Activated B cell treated with CpG ODN at 0.5 μM for 24 hours (primary cell): ENCODE measurements at regions of chr12 and their contacts with region 1.

Region 1: DNA sequence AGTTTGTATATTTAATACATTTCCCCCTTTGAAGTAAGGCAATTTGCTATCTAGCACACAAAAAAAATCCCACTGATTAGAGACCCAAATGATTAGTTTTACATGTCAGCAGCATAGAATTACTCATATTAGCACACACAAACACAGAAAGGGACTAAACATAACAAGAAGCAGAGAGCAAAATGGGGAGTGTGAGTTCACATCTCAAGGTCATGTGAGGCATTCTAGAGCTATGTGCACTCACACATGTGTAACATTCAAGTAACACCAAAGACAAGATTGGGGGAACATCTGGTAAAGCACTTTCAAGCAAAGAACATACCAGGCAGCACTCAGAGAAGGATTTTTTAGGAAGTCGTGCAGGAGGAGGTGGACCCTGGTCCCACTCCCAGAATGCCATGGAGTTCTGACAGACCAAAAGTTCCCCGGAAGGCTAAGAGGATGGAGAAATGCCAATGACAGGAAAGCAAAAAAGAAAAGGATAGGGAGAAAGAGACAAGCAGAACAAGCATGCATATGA is 105.8 kb upstream of the SINHCAF start:
- DNase-seq: no peak
- ATAC-seq: no peak
- H3K4me3 Mint-ChIP-seq: no peak overlapping the region
- H3K27ac Mint-ChIP-seq: no peak overlapping the region
- H3K4me1 Mint-ChIP-seq: no peaks in the 10 kb centered on the region
- H3K27me3 Mint-ChIP-seq: no peaks in the 10 kb centered on the region
- CTCF ChIP-seq: no peak

Region 2: DNA sequence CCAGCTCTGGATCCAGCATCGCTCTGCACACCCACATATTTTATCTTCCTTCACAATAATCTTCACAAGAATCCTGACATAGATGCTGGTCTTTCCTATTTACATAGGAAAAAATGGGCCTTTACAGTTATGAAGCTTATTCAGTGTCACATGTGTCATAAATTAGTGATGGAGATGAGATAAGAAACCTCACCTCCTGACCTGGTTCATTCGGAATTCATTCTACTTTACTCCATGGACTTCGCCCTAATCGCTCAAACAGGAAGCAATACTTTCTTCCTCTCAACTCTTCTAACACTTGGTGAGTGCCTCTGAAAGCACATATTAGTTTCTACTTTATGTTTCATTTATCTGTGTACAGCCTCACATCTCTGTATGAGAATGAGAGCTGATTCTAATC is 93.8 kb before region 1 on chr12:
- CTCF ChIA-PET with region 1: no interaction called
- POLR2A ChIA-PET with region 1: interaction called, 11 read pairs
- intact Hi-C with region 1: no loop called
- DNase-seq: no peak
- ATAC-seq: no peak
- H3K4me3 Mint-ChIP-seq: no peak overlapping the region
- H3K27ac Mint-ChIP-seq: no peak overlapping the region
- H3K4me1 Mint-ChIP-seq: no peaks in the 10 kb centered on the region
- H3K27me3 Mint-ChIP-seq: no peaks in the 10 kb centered on the region
- CTCF ChIP-seq: no peak